ENCODE measurements at regions of chr6 and their contacts with region 1.

Region 1: GRCh38 chr6:12637960-12638641 is 78.5 kb upstream of the PHACTR1 start:
- DNase-seq: peak; percentile 60 to 77
- H3K4me3 ChIP-seq: no peak overlapping the region
- H3K27ac ChIP-seq: no peak overlapping the region
- H3K4me1 ChIP-seq: no peaks in the 10 kb centered on the region
- H3K27me3 ChIP-seq: no peaks in the 10 kb centered on the region
- CTCF ChIP-seq: peak in 5 of 7 experiments; percentile 22 to 61 (median 56)
- EP300 ChIP-seq: no peak
- POLR2A ChIP-seq: no peak

Region 2: DNA sequence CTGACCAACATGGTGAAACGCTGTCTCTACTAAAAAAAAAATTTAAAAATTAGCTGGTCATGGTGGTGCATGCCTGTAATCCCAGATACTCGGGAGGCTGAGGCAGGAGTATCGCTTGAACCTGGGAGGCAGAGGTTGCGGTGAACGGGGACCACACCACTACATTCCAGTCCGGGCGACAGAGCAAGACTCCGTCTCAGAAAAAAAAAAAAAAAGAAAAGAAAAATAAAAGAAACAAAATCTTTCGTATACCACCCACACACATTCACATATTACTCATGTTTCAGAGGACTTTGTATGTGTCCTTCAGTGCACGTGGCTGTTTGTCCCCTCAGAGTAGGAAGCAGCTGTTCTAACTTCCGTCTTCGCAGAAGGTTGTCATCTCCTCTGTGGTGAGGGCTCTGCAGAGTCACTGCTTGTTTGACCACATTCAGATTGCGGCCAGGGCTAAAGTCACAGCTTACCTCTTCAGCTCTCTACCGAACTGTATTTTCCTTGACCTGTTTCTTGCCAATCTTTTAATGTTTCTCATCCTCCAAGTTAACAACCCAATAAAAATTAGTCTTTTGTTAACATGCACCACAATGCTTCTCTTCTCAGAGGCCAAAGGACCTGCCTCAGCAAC is 662.6 kb before region 1 on chr6:
- intact Hi-C with region 1: no loop called
- DNase-seq: peak; percentile 28 to 56
- H3K4me3 ChIP-seq: no peak overlapping the region
- H3K27ac ChIP-seq: no peak overlapping the region
- H3K4me1 ChIP-seq: peaks cover 0 to 8% (median 0%) of the 10 kb centered on the region in 4 donors
- H3K27me3 ChIP-seq: no peaks in the 10 kb centered on the region
- CTCF ChIP-seq: no peak
- EP300 ChIP-seq: no peak
- POLR2A ChIP-seq: no peak

Region 3: GRCh38 chr6:12842114-12842513 is 204.0 kb after region 1 on chr6:
- intact Hi-C with region 1: no loop called
- DNase-seq: no peak
- H3K4me3 ChIP-seq: no peak overlapping the region
- H3K27ac ChIP-seq: no peak overlapping the region
- H3K4me1 ChIP-seq: peaks cover 0 to 5% (median 0%) of the 10 kb centered on the region in 4 donors
- H3K27me3 ChIP-seq: no peaks in the 10 kb centered on the region
- CTCF ChIP-seq: no peak
- EP300 ChIP-seq: no peak
- POLR2A ChIP-seq: no peak

Region 4: DNA sequence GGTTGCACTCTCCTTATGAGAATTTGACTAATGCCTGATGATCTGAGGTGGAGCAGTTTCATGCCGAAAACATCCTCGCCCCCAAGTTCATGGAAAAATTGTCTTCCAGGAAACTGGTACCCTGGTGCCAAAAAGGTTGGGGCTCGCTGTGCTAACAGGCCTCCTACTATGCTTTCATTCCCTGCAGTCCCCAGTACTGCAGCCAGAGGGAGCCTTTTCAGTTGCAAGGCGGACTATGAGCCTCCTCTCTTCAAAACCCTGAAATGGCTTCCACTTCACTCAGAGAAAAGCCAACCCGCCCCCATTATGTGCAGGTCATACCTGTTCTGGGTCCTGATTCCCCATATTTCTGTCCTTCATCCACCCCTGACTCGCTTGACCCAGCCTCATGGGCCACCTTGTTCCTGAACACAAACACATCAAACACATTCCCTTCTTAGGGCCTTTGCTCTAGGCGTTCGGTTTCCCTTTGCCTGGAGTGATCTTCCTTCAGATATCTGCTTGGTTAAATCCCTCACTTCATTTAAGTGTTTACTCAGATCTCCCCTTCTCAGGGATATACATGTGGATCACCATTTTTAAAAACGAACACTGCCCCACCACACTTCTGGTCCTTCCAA is 252.2 kb after region 1 on chr6:
- intact Hi-C with region 1: loop called (anchors 10 kb)
- DNase-seq: no peak
- H3K4me3 ChIP-seq: no peak overlapping the region
- H3K27ac ChIP-seq: no peak overlapping the region
- H3K4me1 ChIP-seq: peaks cover 0 to 15% (median 12%) of the 10 kb centered on the region in 4 donors
- H3K27me3 ChIP-seq: no peaks in the 10 kb centered on the region
- CTCF ChIP-seq: peak in 1 of 7 experiments; percentile 20
- EP300 ChIP-seq: no peak
- POLR2A ChIP-seq: no peak